ENCODE measurements at regions of chr10 and their contacts with region 1.

Region 1: DNA sequence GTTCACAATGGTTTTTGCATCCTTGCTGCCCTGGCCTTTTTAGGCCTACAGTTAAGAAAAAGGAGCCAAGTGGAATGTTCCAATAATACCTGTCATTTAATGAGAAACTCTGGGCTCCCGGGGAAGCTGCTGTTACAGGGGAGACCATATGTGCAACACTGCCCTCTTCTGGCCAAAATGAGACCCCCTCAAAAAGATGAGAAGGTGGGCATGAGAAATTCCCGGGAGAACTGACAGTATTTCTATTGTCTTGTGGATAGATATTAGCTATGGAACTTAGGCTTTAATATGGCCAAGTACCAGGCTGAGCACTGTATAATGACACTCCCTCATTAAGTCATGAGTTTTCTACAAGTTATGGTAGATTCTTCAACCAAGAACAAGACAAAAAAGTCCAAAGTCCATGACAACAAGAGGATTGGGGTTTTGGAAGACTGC is 99.4 kb downstream of the CCDC3 start:
- DNase-seq: peak in 2 of 5 donors; percentile 30 to 48
- ATAC-seq: peak in 1 of 4 donors; percentile 45
- H3K4me3 ChIP-seq: no peak overlapping the region
- H3K27ac ChIP-seq: no peak overlapping the region
- H3K4me1 ChIP-seq: no peaks in the 10 kb centered on the region
- H3K27me3 ChIP-seq: no peaks in the 10 kb centered on the region
- CTCF ChIP-seq: peak; percentile 69 to 84 (median 78)
- POLR2A ChIP-seq: no peak

Region 2: DNA sequence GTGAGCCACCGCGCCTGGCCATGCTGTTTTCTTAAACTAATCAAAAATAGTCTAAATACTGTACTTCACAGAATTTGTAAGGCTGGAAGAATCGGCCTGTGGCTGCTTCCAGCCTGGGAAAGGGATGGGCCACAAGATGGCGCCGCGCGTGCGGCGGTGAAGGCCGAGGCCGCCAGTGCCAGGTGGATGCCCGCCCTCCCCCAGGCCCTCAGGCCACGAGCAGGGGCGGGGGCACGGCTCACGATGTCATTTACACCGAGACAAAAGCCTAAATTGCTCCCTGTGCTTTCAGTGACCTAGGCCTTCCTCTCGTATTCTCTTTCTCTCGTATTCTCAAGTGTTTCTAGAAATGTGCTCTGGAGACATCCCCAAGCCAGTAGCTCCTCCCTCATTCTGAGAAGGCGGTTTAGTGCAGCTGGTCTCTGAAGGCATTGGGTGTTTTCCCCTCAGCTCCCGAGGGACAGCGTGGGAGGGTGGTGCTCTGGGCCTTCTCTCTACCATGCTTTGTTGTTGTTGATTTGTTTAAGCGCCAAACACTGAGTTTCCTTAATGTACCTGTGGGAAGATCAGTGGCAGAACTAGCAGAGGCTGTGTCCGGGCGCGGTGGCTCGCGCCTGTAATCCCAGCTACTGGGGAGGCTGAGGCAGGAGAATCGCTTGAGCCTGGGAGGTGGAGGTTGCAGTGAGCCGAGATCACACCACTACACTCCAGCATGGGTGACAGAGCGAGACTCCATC is 637.8 kb before region 1 on chr10:
- intact Hi-C with region 1: loop called in 5 of 10 experiments (anchors 5 to 10 kb)
- DNase-seq: peak; percentile 63 to 86 (median 77)
- ATAC-seq: peak; percentile 75 to 91 (median 88)
- H3K4me3 ChIP-seq: peak overlapping the region in 10 of 12 donors; percentile 28 to 55 (median 40)
- H3K27ac ChIP-seq: peak overlapping the region in 5 of 12 donors; percentile 59 to 84 (median 67)
- H3K4me1 ChIP-seq: peaks cover 0 to 35% (median 0%) of the 10 kb centered on the region in 12 donors
- H3K27me3 ChIP-seq: no peaks in the 10 kb centered on the region
- CTCF ChIP-seq: peak; percentile 73 to 95 (median 90)
- POLR2A ChIP-seq: no peak

Region 3: GRCh38 chr10:12638103-12638502 is 264.1 kb before region 1 on chr10:
- intact Hi-C with region 1: no loop called
- DNase-seq: no peak
- ATAC-seq: no peak
- H3K4me3 ChIP-seq: no peak overlapping the region
- H3K27ac ChIP-seq: no peak overlapping the region
- H3K4me1 ChIP-seq: no peaks in the 10 kb centered on the region
- H3K27me3 ChIP-seq: no peaks in the 10 kb centered on the region
- CTCF ChIP-seq: no peak
- POLR2A ChIP-seq: no peak

Region 4: DNA sequence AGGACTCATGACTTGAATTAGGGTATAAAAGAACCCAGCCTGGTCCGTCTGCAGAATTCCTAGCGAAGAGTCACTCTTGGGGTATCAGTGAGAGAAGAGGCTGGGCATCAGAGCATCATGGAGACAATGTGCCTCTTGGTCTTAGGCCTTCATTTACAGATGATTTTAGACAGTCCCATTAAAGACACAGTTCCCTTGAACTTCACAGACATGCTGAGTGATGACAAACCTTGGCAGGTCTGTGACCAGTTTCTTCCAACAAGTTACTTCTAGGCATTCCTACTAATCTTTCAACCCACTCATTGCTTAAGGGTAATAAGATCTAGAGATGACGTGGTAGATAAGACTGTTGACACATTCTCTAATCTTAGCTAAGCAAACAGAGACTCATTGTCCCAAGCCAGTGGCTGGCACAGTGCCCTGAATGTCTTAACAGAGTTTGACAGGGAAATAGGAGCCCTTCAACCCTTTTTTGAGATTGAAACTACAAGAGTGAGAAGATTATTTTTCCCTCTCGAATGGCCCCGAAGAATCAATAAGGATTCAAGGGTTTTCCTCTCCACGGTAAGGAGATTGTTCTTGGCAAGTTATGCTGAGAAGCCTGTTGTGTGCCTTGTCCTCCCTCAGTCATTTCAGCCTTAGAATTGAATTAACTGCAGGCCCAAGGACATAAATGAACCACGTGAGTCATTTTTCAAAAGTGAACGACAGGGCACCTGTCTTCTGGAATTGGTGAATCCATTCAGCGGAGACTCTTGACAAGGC is 181.8 kb before region 1 on chr10:
- intact Hi-C with region 1: loop called in 8 of 10 experiments (anchors 5 to 10 kb)
- DNase-seq: peak; percentile 41 to 80 (median 71)
- ATAC-seq: peak in 3 of 4 donors; percentile 81 to 89 (median 85)
- H3K4me3 ChIP-seq: no peak overlapping the region
- H3K27ac ChIP-seq: peak overlapping the region in 3 of 12 donors; percentile 4 to 54 (median 25)
- H3K4me1 ChIP-seq: peaks cover 0 to 28% (median 12%) of the 10 kb centered on the region in 12 donors
- H3K27me3 ChIP-seq: no peaks in the 10 kb centered on the region
- CTCF ChIP-seq: no peak
- POLR2A ChIP-seq: no peak

Region 5: DNA sequence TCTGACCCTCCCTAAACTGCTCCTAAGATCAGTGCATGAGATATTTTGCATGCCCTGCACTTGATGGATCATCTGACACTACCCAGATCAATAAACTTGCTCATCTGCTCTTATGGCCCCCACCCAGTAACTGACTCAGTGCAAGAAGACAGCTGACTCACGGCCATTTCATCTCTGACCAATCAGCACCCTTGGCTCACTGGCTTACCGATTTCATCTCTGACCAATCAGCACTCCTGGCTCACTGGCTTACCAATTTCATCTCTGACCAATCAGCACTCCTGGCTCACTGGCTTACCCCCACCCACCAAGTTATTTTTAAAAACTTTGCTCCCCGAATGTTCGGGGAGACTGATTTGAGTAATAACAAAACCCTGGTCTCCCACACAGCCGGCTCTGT is 160.6 kb after region 1 on chr10:
- intact Hi-C with region 1: loop called in 1 of 10 experiments (anchors 10 kb)
- DNase-seq: no peak
- ATAC-seq: no peak
- H3K4me3 ChIP-seq: no peak overlapping the region
- H3K27ac ChIP-seq: no peak overlapping the region
- H3K4me1 ChIP-seq: no peaks in the 10 kb centered on the region
- H3K27me3 ChIP-seq: peaks cover 0 to 10% (median 0%) of the 10 kb centered on the region in 9 donors
- CTCF ChIP-seq: no peak
- POLR2A ChIP-seq: no peak

Region 6: GRCh38 chr10:13099666-13100348 is 197.7 kb after region 1 on chr10 and contains the start of gene OPTN:
- intact Hi-C with region 1: loop called in 1 of 10 experiments (anchors 10 kb)
- DNase-seq: peak; percentile 81 to 88 (median 87)
- ATAC-seq: peak; percentile 76 to 93 (median 91)
- H3K4me3 ChIP-seq: peak within 1 kb of the TSS; percentile 78 to 98 (median 94)
- H3K27ac ChIP-seq: peak within 1 kb of the TSS; percentile 86 to 99 (median 96)
- H3K4me1 ChIP-seq: peaks cover 0 to 39% (median 23%) of the 10 kb centered on the region in 12 donors
- H3K27me3 ChIP-seq: no peaks in the 10 kb centered on the region
- CTCF ChIP-seq: peak; percentile 45 to 90 (median 70)
- POLR2A ChIP-seq: peak in 1 of 2 donors; percentile 79
- total RNA-seq, gene OPTN: 89.4 to 191 (median 140) TPM

Region 7: GRCh38 chr10:13352519-13352918 is 450.4 kb after region 1 on chr10:
- intact Hi-C with region 1: no loop called
- DNase-seq: no peak
- ATAC-seq: no peak
- H3K4me3 ChIP-seq: no peak overlapping the region
- H3K27ac ChIP-seq: no peak overlapping the region
- H3K4me1 ChIP-seq: peaks cover 0 to 18% (median 13%) of the 10 kb centered on the region in 12 donors
- H3K27me3 ChIP-seq: peaks cover 0 to 42% (median 32%) of the 10 kb centered on the region in 9 donors
- CTCF ChIP-seq: peak in 4 of 12 donors; percentile 7 to 37 (median 17)
- POLR2A ChIP-seq: no peak